ENCODE measurements at regions of chr17 and their contacts with region 1.

Region 1: DNA sequence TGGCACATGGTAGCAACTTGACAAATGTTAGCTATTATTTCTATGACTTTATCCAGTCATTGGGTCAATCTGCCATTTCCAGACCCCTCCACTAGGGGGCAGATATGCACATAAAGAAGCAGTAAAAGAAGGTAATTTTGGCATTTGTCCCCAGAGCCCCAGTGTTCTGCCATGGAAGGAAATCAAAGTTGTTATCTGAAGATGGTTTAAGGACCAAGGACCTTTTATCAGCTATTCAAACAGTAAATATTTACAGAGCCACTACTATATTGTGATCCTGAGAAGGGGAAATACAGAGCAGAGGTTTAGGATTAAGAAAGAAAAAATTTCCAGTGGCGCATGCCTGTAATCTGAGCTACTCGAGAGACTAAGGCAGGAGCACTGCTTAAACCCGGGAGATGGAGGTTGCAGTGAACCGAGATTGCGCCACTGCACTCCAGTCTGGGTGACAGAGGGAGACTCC is 20.0 kb downstream of the TRAF4 start:
- DNase-seq: peak; percentile 78 to 89 (median 82)
- H3K4me3 ChIP-seq: no peak overlapping the region
- H3K27ac ChIP-seq: no peak overlapping the region
- H3K4me1 ChIP-seq: peaks cover 3 to 15% (median 13%) of the 10 kb centered on the region in 4 experiments
- H3K27me3 ChIP-seq: no peaks in the 10 kb centered on the region

Region 2: GRCh38 chr17:28405632-28406472 is 358.0 kb before region 1 on chr17 and contains the start of gene SLC46A1:
- CTCF ChIA-PET with region 1: no interaction called
- POLR2A ChIA-PET with region 1: no interaction called
- DNase-seq: peak in 2 of 3 donors; percentile 44 to 50
- H3K4me3 ChIP-seq: peak within 1 kb of the TSS; percentile 50 to 84 (median 66)
- H3K27ac ChIP-seq: no peak within 1 kb of the TSS
- H3K4me1 ChIP-seq: peaks cover 0 to 40% (median 32%) of the 10 kb centered on the region in 4 experiments
- H3K27me3 ChIP-seq: no peaks in the 10 kb centered on the region

Region 3: DNA sequence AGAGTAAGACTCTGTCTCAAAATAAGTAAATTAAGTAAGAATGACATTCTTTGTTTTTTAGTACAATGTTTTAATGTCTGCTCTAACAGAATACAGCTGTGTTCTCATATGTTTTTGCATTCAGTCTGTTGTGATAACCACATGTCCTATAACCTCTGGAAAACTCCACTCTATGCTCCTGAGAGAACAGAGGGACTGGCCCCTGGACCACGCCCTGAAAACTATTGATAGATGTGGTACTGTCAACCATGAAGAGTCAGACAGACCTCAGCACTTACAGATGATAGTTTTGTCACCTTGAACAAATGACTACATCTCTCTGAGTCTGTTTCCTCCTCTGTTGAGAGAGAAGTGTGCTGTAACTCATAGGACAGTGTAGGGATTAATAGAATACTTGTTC is 93.9 kb before region 1 on chr17:
- CTCF ChIA-PET with region 1: no interaction called
- POLR2A ChIA-PET with region 1: no interaction called
- DNase-seq: no peak
- H3K4me3 ChIP-seq: no peak overlapping the region
- H3K27ac ChIP-seq: no peak overlapping the region
- H3K4me1 ChIP-seq: peaks cover 0 to 2% (median 0%) of the 10 kb centered on the region in 4 experiments
- H3K27me3 ChIP-seq: no peaks in the 10 kb centered on the region

Region 4: DNA sequence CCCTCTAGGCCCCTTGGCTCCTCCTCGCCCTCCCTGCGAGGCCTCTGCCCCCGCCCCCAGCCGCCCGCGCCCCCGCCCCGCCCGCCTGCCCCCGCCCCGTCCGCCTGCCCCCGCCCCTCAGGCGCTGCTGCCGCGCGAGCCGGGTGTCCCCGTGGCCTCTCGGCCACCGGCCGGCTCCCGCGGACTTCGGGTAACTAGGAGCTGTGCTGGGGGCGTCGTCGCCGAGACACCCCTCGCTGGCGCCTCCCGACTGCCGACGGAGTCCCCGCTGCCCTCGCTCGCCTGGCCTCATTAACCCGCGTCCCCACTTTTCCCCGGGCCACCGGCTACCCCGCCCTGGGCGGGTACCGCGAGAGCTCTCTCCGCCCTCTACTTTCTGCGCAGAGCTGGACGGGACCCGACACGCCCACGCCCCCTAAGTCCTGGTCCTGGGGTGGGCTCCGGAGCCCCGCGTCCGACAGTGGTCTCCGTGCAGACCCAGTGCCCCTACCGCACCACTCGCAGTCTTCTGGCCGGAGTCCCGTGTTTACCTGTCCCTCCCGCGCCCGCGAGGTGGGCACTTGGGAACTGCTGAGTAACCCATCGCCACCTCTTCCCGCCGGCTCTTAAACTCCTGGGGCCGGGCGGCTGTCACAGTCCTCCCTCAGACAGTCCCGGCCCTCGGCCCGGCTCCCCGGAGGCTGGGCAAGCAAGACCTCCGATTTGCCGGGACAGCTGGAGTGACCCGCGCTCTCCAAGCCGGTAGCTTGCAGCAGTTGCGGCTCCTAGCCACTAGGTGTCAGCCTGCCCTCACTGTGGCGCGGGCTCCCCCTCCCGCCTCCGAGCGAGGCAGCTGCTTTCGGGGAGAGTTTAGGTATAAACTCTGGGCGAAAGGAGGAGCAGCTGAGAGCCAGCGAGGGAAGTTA is 37.4 kb before region 1 on chr17 and contains the start of gene TLCD1:
- CTCF ChIA-PET with region 1: interaction called, 84 read pairs
- POLR2A ChIA-PET with region 1: interaction called, 3 read pairs
- DNase-seq: peak; percentile 90 to 92 (median 92)
- H3K4me3 ChIP-seq: peak within 1 kb of the TSS; percentile 51 to 91 (median 83)
- H3K27ac ChIP-seq: peak within 1 kb of the TSS in 1 of 2 experiments; percentile 94
- H3K4me1 ChIP-seq: peaks cover 5 to 60% (median 45%) of the 10 kb centered on the region in 4 experiments
- H3K27me3 ChIP-seq: no peaks in the 10 kb centered on the region

Region 5: DNA sequence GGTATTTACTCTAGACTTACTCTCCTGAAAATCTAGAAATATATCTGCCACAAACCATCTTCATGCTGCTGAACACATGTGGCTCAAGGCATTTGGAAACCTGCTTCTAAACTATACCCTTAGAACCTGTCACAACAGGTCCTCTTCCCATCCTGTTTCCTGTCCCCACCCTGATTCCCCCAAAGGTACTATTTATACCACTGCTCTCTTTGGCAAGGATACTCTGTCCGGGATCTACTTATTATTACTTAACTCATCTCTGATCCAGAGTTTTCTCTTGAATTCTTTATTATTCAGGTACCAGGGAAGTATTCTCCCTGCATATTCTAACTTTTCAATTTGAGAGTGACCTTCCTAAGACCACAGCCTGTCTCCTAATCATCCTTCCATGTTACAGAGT is 13.3 kb after region 1 on chr17:
- CTCF ChIA-PET with region 1: interaction called, 47 read pairs
- POLR2A ChIA-PET with region 1: interaction called, 3 read pairs
- DNase-seq: no peak
- H3K4me3 ChIP-seq: no peak overlapping the region
- H3K27ac ChIP-seq: peak overlapping the region in 1 of 2 experiments; percentile 9
- H3K4me1 ChIP-seq: peaks cover 0 to 20% (median 9%) of the 10 kb centered on the region in 4 experiments
- H3K27me3 ChIP-seq: no peaks in the 10 kb centered on the region

Region 6: DNA sequence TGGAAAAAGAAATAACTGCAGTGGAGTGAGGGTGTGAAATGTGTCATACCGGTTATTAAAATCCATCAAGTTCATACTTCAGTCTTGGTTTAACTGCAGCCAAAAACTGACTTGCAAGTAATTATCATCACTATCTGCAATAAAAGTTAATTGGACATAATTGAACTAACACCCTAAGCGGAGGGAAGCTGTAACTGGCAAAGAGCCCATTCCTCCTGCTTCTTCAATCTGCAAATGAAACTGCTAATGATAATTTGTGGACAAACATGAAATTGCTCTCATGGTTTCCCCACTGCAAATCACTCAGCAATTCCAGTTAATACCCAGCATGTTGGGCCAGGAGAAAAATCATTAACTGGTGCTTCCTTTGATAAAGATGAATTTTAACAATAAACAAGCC is 32.2 kb after region 1 on chr17:
- CTCF ChIA-PET with region 1: interaction called, 16 read pairs
- POLR2A ChIA-PET with region 1: no interaction called
- DNase-seq: no peak
- H3K4me3 ChIP-seq: no peak overlapping the region
- H3K27ac ChIP-seq: no peak overlapping the region
- H3K4me1 ChIP-seq: peaks cover 0 to 8% (median 6%) of the 10 kb centered on the region in 4 experiments
- H3K27me3 ChIP-seq: no peaks in the 10 kb centered on the region

Region 7: DNA sequence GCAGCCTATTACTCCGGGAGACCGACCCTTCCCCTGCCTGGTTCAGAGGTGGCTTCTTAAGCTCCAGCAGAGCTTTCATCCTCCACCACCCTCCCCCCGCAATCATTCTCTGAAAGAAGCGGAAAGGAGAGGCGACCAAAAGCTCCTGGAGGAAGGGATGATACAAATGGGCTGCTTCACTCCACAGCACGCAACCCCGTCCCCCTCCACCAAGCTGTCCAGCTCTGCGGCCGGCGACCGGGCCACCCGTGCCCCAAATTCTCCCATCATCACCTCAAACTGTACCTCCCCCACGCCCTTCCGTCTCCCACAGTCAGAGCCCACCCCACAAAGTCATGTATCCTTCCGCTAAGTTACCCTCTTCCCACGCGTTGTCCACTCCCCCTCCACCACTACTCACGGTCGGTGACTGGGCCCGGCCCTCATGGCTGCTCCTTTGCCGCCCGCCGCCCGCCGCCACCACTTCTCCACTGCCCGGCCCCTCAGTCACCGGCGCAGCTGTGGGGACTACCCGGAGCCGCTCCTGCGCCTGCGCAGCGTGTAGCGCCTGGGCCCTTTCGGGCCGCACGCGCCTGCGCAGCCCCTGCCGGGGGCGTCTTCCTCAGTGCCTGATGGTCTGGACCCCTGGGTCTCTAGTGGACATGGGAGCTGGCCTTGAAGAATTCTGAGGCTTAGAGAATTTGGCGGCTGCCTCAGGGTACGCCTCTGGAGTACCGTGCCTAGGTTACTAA is 78.6 kb after region 1 on chr17 and contains the start of gene FAM222B:
- CTCF ChIA-PET with region 1: interaction called, 27 read pairs
- POLR2A ChIA-PET with region 1: no interaction called
- DNase-seq: peak; percentile 84 to 92 (median 91)
- H3K4me3 ChIP-seq: peak within 1 kb of the TSS; percentile 68 to 96 (median 83)
- H3K27ac ChIP-seq: peak within 1 kb of the TSS; percentile 84 to 87
- H3K4me1 ChIP-seq: peaks cover 5 to 18% (median 12%) of the 10 kb centered on the region in 4 experiments
- H3K27me3 ChIP-seq: no peaks in the 10 kb centered on the region

Region 8: GRCh38 chr17:28871056-28871579 is 107.3 kb after region 1 on chr17:
- CTCF ChIA-PET with region 1: interaction called, 12 read pairs
- POLR2A ChIA-PET with region 1: no interaction called
- DNase-seq: peak in 2 of 3 donors; percentile 35 to 39
- H3K4me3 ChIP-seq: peak overlapping the region in 1 of 7 experiments; percentile 4
- H3K27ac ChIP-seq: peak overlapping the region in 1 of 2 experiments; percentile 53
- H3K4me1 ChIP-seq: peaks cover 2 to 10% (median 7%) of the 10 kb centered on the region in 4 experiments
- H3K27me3 ChIP-seq: no peaks in the 10 kb centered on the region

Region 9: DNA sequence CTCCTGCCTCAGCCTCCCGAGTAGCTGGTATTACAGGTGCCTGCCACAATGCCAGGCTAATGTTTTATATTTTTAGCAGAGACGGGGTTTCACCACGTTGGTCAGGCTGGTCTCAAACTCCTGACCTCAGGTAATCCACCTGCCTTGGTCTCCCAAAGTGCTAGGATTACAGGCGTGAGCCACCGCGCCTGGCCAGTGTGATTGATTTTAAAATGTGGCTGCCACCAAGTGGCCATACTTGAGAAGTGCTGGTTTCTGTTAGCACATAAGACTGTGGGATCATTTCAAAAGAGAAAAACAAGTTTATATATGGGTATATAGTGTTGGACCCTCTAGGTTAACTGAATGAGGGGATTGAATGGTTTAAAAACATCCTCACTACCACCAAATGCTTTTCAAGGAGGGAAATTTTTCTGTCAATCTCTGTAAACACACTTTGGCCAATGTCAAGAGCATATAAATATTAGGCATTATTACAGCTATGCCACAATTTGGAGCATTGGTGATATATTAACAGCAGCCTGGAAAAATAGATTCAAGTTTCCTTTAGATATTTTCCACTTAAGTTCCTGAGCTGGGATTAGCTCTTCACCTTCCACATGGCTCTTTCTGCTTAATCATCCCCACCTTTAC is 152.6 kb after region 1 on chr17:
- CTCF ChIA-PET with region 1: interaction called, 18 read pairs
- POLR2A ChIA-PET with region 1: no interaction called
- DNase-seq: peak; percentile 45 to 63 (median 59)
- H3K4me3 ChIP-seq: no peak overlapping the region
- H3K27ac ChIP-seq: no peak overlapping the region
- H3K4me1 ChIP-seq: no peaks in the 10 kb centered on the region
- H3K27me3 ChIP-seq: no peaks in the 10 kb centered on the region

Measured in common myeloid progenitor, CD34-positive (primary cell).